Activated naive CD4-positive, alpha-beta T cell treated with anti-CD3 and anti-CD28 coated beads for 36 hours (primary cell): ENCODE measurements at regions of chr9 and their contacts with region 1.

Region 1: DNA sequence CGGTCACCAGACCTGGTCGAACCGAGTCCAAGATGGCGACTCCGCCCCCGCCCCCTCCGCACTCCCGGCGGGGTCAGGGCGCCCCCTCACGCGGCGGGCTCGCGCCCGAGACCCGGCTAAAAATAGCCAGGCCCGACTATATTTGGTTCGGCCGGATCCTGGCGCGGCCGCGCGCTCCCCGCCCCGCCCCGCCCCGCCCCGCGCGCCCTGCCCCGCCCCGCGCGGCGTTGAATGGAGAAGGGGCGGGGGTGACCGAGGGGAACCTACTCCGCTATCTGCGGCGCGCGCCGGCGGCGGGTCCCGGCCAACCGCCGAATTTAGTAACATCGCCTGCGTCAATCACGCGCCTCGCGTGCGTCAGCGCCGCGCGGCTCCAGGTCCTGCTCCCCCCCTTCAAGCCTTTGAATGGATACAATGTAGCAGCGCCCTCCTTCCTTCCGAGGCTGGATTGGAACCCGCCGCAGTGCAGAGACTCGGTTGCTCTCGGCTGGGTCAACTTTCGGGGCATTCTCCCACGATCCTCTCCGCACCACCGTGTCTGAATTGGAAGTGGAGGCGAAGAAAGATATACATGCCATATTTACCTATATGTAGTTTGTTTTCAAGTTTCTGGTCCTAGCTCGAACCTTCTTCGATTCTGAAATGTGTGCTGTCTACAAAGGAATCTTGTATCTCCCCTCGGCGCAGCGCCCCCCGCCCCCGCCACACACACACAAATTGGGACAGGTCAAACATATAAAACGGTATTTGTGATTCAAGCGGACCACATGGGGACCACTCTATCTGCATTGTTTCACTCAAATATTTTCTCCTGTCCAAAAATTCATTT is 1.6 kb upstream of the NR4A3 start:
- DNase-seq: peak; percentile 91
- H3K4me3 Mint-ChIP-seq: peak overlapping the region; percentile 94
- H3K27ac Mint-ChIP-seq: peak overlapping the region; percentile 91
- H3K4me1 Mint-ChIP-seq: peaks cover 45% of the 10 kb centered on the region
- H3K27me3 Mint-ChIP-seq: peaks cover 17% of the 10 kb centered on the region

Region 2: DNA sequence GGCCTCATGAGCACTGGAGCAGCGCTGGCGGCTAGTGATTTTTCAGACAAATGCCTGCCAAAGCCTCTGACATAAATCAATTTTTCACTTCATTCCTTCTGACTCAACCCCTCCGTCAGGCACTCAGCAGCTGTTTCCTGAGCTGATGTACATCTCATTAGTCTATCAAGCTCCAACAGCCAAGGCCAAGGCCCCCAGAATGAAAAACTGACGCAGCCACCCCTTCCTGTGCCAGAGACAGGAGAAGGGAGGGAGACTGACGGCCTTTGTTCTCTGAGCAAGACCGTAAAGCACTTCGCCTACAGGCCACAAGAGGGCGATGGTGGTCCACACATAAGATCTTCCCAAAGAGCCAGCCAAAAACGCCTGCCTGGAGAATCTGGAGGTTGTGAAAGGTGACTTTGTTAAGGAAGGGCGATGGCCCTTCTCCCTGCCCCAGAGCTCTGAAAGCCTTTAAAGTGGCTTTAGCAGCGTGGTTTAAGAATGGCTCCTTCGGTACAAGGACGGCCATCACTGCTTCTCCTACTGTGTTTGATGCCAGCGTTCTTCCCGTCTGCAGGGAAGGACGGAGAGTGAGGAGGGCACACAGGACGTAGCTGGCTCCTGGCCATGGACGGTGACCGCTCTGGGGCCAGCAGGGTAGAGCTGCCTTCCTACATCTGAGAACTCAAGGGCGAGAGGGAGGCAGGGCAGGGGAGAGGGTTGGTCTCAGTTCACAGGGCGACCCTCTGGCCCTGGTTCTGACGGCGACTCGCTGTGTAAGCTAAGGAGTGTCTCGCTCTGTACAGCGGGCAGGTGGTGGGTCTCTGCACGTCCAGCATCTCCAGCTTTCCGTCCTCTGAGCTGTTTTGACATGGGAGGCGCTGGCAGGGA is 635.4 kb before region 1 on chr9:
- CTCF ChIA-PET with region 1: no interaction called
- intact Hi-C with region 1: loop called (anchors 2 kb)
- DNase-seq: peak; percentile 87
- H3K4me3 Mint-ChIP-seq: no peak overlapping the region
- H3K27ac Mint-ChIP-seq: peak overlapping the region; percentile 64
- H3K4me1 Mint-ChIP-seq: peaks cover 34% of the 10 kb centered on the region
- H3K27me3 Mint-ChIP-seq: peaks cover 3% of the 10 kb centered on the region

Region 3: GRCh38 chr9:99793528-99793927 is 26.5 kb before region 1 on chr9:
- CTCF ChIA-PET with region 1: no interaction called
- intact Hi-C with region 1: loop called (anchors 1 kb)
- DNase-seq: no peak
- H3K4me3 Mint-ChIP-seq: no peak overlapping the region
- H3K27ac Mint-ChIP-seq: no peak overlapping the region
- H3K4me1 Mint-ChIP-seq: no peaks in the 10 kb centered on the region
- H3K27me3 Mint-ChIP-seq: peaks cover 23% of the 10 kb centered on the region

Region 4: DNA sequence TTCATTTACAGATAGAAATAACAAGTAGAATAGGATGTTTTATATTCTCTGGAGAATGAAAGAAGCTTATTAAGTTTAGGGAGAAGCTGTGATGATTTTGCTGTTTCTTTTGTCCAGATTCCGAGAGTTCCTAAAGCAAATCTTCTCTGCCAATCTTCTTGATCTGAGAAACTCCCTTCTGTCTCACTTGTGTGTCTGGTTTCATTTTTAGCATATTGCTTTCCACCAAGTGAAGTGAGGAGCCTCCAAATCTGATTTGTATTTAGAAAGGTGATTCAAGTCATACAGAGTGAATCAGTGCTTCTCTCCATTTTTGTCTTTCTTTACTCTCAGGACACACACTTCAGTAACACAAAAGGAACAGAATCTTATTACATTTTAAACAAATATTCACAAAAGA is 134.7 kb after region 1 on chr9:
- CTCF ChIA-PET with region 1: interaction called, 4 read pairs
- intact Hi-C with region 1: loop called (anchors 1 kb)
- DNase-seq: no peak
- H3K4me3 Mint-ChIP-seq: no peak overlapping the region
- H3K27ac Mint-ChIP-seq: peak overlapping the region; percentile 50
- H3K4me1 Mint-ChIP-seq: peaks cover 23% of the 10 kb centered on the region
- H3K27me3 Mint-ChIP-seq: no peaks in the 10 kb centered on the region

Region 5: GRCh38 chr9:100322954-100323536 is 503.0 kb after region 1 on chr9:
- CTCF ChIA-PET with region 1: no interaction called
- intact Hi-C with region 1: loop called (anchors 5 kb)
- DNase-seq: peak; percentile 52
- H3K4me3 Mint-ChIP-seq: no peak overlapping the region
- H3K27ac Mint-ChIP-seq: no peak overlapping the region
- H3K4me1 Mint-ChIP-seq: peaks cover 12% of the 10 kb centered on the region
- H3K27me3 Mint-ChIP-seq: no peaks in the 10 kb centered on the region

Region 6: DNA sequence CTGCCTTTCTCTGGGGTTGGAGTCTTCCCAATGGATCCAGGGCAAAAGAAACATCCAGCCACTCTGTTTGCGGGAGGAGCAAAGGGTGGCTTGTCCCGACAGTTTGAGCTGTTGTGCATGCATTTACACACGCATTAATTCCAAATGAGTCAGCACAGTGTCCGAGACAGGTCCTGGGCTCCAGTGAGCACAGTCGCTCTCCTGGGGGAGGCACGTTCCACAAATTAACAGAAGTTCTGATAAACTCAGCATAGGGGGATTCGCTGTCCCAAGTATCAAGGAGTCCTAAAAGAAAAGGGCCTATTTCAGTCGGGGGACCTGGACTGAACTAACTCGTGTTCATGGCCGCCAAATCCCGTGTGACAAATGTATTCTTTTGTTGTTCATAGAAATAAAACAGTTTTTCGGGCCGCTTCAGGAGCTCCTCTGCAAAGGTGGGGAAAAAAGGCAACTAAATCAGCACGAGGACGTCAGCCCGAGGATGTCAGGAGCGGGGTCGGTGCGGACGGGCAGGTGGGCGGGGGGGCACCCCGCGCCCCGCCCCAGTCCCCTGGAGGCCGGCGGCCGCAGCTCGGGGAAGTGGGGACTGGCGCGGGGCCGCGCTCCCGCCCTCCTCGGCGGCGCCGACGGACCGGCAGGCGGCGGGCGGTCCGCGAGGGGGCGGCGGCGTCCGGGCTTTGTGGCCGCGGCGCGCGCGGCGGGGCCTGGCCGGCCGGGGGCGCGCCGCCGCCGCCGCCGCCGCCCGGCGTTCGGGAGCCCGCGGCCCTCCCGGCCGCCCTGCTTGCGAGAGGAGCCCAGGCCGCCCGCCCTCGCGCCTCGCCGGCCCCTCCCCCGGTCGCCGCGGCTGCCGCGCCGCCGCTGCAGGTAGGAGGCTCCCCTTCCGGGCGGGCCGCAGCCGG is 606.7 kb after region 1 on chr9 and contains the start of gene MSANTD3:
- CTCF ChIA-PET with region 1: no interaction called
- intact Hi-C with region 1: loop called (anchors 5 kb)
- DNase-seq: peak; percentile 52
- H3K4me3 Mint-ChIP-seq: peak within 1 kb of the TSS; percentile 91
- H3K27ac Mint-ChIP-seq: peak within 1 kb of the TSS; percentile 82
- H3K4me1 Mint-ChIP-seq: peaks cover 30% of the 10 kb centered on the region
- H3K27me3 Mint-ChIP-seq: no peaks in the 10 kb centered on the region
- total RNA-seq, gene MSANTD3: 10.4 to 11.5 TPM

Region 7: DNA sequence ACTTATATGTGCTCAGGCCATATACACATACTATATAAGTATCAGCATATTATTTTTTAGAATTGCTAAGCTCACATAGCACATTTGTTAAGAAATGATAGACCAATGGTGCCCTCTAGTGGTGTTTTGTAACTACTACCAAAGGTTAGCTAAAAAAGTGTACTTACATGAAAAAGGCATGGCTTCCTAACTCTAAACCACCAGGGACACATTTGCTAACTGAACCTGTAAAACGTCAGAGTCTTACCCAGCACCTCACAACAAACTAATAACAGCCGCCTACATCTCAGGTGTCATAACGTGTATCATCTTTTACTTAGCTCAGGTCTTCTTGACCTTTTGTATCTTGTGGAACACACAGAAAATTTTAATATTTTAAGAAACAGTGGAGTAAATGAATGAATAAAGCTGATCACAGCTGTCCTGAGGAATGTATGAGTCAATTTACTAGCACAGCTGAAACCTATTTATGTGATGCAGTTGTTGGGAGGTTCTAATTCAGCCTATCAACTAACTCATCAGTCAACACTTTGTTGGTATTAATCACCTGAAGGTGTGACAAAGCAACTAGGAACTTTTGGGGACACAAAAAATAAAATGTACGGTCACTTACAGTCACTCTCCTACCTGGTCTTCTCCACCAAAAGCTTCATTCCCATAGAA is 1491.8 kb after region 1 on chr9:
- CTCF ChIA-PET with region 1: no interaction called
- intact Hi-C with region 1: no loop called
- DNase-seq: no peak
- H3K4me3 Mint-ChIP-seq: no peak overlapping the region
- H3K27ac Mint-ChIP-seq: no peak overlapping the region
- H3K4me1 Mint-ChIP-seq: no peaks in the 10 kb centered on the region
- H3K27me3 Mint-ChIP-seq: peaks cover 6% of the 10 kb centered on the region